Activated CD8-positive, alpha-beta memory T cell treated with anti-CD3 and anti-CD28 coated beads, Interleukin-2, amount 10 ng/mL, durations not matched to agents 7 days and 5 days (primary cell): ENCODE measurements at regions of chr7 and their contacts with region 1.

Region 1: DNA sequence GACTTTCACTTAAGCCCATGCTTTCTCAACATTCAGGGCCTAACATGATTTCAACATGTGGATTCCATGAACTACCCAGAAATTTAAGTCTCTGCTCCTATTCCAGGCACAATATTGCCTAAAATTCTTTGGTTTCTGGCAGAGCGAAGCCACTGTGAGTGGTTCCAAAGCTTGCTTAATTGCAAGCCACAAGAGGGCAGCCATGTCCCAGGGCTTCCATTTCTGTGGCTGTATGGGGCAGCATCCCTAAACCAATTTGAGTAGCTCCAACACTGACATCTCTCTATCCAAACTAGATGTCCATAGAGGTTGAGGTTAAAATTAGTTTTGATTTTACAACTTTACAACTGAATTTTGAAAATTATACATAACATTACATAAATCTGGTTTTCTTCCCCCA is 56.3 kb upstream of the MDFIC start:
- DNase-seq: peak; percentile 72
- ATAC-seq: peak; percentile 73
- H3K4me3 Mint-ChIP-seq: no peak overlapping the region
- H3K27ac Mint-ChIP-seq: no peak overlapping the region
- H3K4me1 Mint-ChIP-seq: no peaks in the 10 kb centered on the region
- H3K27me3 Mint-ChIP-seq: no peaks in the 10 kb centered on the region

Region 2: DNA sequence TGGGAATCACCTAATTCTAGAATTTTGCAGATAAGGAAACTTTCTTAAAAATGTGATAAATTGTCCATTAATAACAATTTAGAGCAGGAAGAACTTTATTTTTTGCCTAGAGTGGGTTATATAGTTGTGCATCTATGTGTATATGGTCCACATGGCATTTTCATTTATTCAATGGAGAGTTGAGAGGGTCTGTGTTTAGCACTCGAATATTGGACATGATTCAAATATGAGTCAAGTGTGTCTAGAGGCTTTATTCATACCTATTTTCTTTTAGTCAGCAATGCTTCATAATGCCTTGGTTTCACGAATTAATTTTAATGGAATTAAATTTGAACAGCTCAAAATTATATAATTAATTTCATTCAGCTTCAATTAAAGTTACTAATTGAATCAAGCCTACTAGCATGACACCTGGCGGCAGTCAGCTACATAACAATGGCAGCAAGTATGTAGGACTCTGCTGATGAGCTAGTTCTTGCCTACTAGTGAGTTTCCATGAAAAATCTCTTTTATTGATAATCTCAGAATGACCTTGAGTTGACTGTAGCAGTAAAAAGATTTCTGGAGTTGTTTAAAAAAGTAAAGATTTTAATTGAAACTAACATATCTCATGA is 74.0 kb after region 1 on chr7:
- CTCF ChIA-PET with region 1: interaction called, 12 read pairs
- DNase-seq: no peak
- ATAC-seq: no peak
- H3K4me3 Mint-ChIP-seq: no peak overlapping the region
- H3K27ac Mint-ChIP-seq: no peak overlapping the region
- H3K4me1 Mint-ChIP-seq: peaks cover 47% of the 10 kb centered on the region
- H3K27me3 Mint-ChIP-seq: no peaks in the 10 kb centered on the region

Region 3: DNA sequence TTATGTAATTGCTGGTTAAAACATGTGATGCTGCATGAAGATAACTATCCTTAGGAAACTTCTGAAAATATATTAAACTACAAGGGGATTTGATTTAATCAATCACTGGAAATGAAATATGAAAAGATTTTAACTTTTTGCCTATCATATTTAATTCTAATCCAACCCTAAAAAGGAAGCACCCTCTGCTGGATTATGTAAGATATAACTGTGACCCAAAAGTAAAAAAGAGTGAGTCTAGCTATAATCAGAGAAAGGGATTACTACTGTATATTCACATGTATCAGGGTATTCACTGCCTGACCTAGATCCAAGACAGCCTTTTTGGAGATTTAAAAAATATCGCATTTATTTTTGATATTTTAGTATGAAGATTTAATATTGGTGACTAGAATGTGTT is 351.8 kb after region 1 on chr7:
- CTCF ChIA-PET with region 1: interaction called, 40 read pairs
- DNase-seq: no peak
- ATAC-seq: no peak
- H3K4me3 Mint-ChIP-seq: no peak overlapping the region
- H3K27ac Mint-ChIP-seq: no peak overlapping the region
- H3K4me1 Mint-ChIP-seq: peaks cover 9% of the 10 kb centered on the region
- H3K27me3 Mint-ChIP-seq: no peaks in the 10 kb centered on the region

Region 4: DNA sequence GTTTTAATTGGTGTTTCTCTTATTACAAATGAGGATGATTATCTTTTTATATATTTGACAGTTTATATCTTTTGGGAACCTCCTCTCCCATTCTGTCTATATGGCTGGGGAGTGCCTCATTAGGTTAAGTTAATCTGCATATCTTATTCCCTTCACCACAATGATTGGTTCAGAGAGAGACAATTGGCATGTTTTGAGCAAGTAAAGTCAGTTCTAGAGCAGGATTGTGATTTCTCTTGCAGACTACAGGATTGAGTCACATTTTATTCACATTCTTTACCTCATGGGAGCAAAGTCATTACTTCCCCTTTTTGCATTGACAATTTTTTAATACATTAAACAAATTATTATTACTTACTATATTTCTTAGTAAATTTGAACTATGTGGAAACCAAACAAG is 401.9 kb after region 1 on chr7:
- CTCF ChIA-PET with region 1: no interaction called
- DNase-seq: no peak
- ATAC-seq: no peak
- H3K4me3 Mint-ChIP-seq: no peak overlapping the region
- H3K27ac Mint-ChIP-seq: no peak overlapping the region
- H3K4me1 Mint-ChIP-seq: no peaks in the 10 kb centered on the region
- H3K27me3 Mint-ChIP-seq: peaks cover 3% of the 10 kb centered on the region